Breast epithelium (tissue), 4 donors: ENCODE measurements at regions of chr19 and their contacts with region 1.

Region 1: DNA sequence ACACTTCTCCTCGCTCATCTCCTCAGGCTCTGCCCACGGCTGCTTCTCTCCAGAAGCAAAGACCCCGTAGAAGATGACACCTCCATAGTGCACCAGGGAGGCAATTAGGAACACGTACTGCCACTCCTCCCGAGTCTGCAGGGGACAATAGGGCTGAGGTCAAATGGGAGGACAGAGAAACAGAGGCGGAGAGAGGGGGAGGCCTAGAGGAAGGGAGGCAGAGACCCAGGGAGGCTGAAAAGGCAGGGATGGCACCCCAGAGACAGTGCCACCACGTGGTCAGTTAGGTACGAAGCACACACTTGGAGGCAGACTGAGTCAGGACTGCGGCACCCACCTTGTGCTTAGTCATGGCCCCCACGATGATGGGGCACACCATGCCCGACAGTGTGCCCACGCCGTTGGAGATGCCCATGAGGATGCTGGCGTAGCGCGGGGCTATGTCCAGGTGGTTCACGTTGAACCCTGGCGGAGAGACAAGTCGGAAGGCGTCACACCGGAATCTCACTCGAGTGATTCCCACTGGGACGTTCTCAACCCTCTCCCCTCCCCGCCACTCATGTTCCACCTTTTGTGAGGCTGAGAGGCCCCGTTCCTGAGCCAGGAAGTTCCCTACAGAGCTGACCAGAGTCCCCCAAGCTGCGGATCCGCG is 5.6 kb downstream of the GFY start:
- DNase-seq: no peak
- H3K4me3 ChIP-seq: no peak overlapping the region
- H3K27ac ChIP-seq: no peak overlapping the region
- H3K4me1 ChIP-seq: peaks cover 5 to 6% of the 10 kb centered on the region in 2 donors
- H3K27me3 ChIP-seq: peaks cover 17 to 79% of the 10 kb centered on the region in 2 donors
- CTCF ChIP-seq: no peak
- POLR2A ChIP-seq: no peak

Region 2: DNA sequence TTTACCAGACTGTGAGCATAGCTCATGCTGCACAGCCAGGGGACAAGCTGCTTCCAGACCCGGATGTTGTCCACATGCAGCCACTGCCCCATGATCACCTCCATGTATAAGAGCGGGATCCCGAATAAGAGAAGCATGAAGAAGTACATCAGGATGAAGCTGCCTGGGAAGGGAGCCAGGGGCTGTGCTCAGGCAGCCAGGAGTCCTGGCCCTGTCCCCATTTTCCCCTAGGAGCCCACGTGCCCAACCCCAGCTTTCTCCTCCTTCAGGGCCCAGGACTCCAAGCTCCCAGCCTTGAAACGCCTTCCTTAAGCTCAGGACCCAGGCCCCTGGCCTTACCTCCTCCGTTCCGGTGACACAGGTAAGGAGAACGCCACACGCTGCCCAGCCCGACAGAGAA is 175.1 kb before region 1 on chr19:
- intact Hi-C with region 1: loop called (anchors 10 kb)
- DNase-seq: no peak
- H3K4me3 ChIP-seq: no peak overlapping the region
- H3K27ac ChIP-seq: no peak overlapping the region
- H3K4me1 ChIP-seq: no peaks in the 10 kb centered on the region
- H3K27me3 ChIP-seq: no peaks in the 10 kb centered on the region
- CTCF ChIP-seq: no peak
- POLR2A ChIP-seq: no peak

Region 3: GRCh38 chr19:49968279-49968922 is 537.6 kb after region 1 on chr19:
- intact Hi-C with region 1: no loop called
- DNase-seq: no peak
- H3K4me3 ChIP-seq: no peak overlapping the region
- H3K27ac ChIP-seq: no peak overlapping the region
- H3K4me1 ChIP-seq: no peaks in the 10 kb centered on the region
- H3K27me3 ChIP-seq: peaks cover 0 to 18% of the 10 kb centered on the region in 2 donors
- CTCF ChIP-seq: no peak
- POLR2A ChIP-seq: no peak

Region 4: DNA sequence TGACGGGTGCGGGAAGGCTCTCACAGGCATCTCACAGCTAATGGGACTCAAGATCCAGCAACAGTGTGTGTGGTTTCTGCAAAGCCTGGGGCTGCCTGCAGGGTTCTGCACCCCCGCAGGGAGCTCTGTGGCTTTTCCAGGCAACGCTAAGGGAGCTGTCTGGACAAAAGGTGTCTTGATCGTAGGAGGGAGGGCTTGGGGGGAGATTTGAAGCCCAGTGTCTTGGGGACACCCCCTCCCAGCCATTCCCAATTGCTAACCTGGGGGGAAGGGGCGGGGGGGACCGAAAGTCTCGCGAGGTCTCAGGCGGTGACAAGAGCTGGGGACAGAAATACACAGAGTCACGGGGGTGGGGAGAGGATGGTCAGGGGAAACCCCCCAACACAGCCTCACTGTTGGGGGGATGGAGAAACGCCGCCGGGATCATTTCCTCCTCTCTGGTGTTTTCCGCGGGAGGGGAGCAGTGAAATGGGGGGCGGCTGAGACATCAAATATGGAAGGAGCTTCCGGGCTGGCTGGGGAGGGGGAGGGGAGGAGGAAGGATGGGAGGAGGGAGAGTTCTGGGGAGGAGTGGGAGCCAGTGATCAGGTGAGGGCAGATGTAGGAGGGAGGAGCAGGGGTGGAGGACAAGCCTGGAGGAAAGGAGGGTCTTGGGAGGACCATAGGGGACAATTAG is 885.1 kb after region 1 on chr19:
- intact Hi-C with region 1: no loop called
- DNase-seq: no peak
- H3K4me3 ChIP-seq: peak overlapping the region in 2 of 3 donors; percentile 26 to 38
- H3K27ac ChIP-seq: no peak overlapping the region
- H3K4me1 ChIP-seq: no peaks in the 10 kb centered on the region
- H3K27me3 ChIP-seq: peaks cover 3 to 51% of the 10 kb centered on the region in 2 donors
- CTCF ChIP-seq: no peak
- POLR2A ChIP-seq: no peak